T-cell (primary cell): ENCODE measurements at regions of chr5 and their contacts with region 1.

Region 1: DNA sequence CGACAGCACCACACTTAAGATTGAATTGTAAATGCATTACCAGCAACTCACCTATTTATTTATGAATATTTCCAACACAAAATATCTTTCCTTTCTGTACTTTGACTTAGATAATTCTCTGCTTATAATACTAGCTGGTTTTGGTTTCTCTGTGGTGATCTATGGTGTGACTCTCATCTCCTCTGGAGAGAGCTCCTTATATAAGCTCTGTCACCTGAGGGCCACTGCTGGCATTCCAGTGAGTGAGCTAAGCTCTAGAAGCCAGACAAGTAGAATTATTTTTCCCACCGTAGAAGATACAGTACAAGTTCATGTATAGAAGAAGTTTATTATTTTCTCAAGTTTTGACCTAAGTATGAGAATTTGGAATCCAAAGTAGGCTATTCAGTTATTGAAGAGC is 111.5 kb downstream of the CDC42SE2 start:
- DNase-seq: peak in 1 of 35 experiments; percentile 59
- ATAC-seq: no peak
- H3K4me3 ChIP-seq: no peak overlapping the region
- H3K4me3 Mint-ChIP-seq: peak overlapping the region; percentile 26 to 52 (median 47)
- H3K27ac ChIP-seq: peak overlapping the region; percentile 79
- H3K27ac Mint-ChIP-seq: peak overlapping the region; percentile 92 to 100
- H3K4me1 ChIP-seq: peaks cover 45 to 48% of the 10 kb centered on the region in 2 experiments
- H3K4me1 Mint-ChIP-seq: peaks cover 86 to 97% (median 95%) of the 10 kb centered on the region in 3 donors
- H3K27me3 ChIP-seq: no peaks in the 10 kb centered on the region
- H3K27me3 Mint-ChIP-seq: no peaks in the 10 kb centered on the region

Region 2: GRCh38 chr5:131148835-131149234 is 226.5 kb before region 1 on chr5:
- CTCF ChIA-PET with region 1: no interaction called
- POLR2A ChIA-PET with region 1: no interaction called
- DNase-seq: no peak
- ATAC-seq: no peak
- H3K4me3 ChIP-seq: no peak overlapping the region
- H3K4me3 Mint-ChIP-seq: no peak overlapping the region
- H3K27ac ChIP-seq: no peak overlapping the region
- H3K27ac Mint-ChIP-seq: no peak overlapping the region
- H3K4me1 ChIP-seq: no peaks in the 10 kb centered on the region
- H3K4me1 Mint-ChIP-seq: no peaks in the 10 kb centered on the region
- H3K27me3 ChIP-seq: no peaks in the 10 kb centered on the region
- H3K27me3 Mint-ChIP-seq: no peaks in the 10 kb centered on the region

Region 3: GRCh38 chr5:131357739-131358561 is 17.4 kb before region 1 on chr5:
- CTCF ChIA-PET with region 1: interaction called, 4 to 11 read pairs
- POLR2A ChIA-PET with region 1: interaction called, 7 read pairs
- DNase-seq: peak in 10 of 35 experiments; percentile 16 to 59 (median 34)
- ATAC-seq: peak; percentile 68 to 76 (median 71)
- H3K4me3 ChIP-seq: no peak overlapping the region
- H3K4me3 Mint-ChIP-seq: peak overlapping the region; percentile 3 to 57 (median 27)
- H3K27ac ChIP-seq: peak overlapping the region; percentile 66
- H3K27ac Mint-ChIP-seq: peak overlapping the region; percentile 81 to 90
- H3K4me1 ChIP-seq: peaks cover 30 to 33% of the 10 kb centered on the region in 2 experiments
- H3K4me1 Mint-ChIP-seq: peaks cover 75 to 81% (median 77%) of the 10 kb centered on the region in 3 donors
- H3K27me3 ChIP-seq: no peaks in the 10 kb centered on the region
- H3K27me3 Mint-ChIP-seq: no peaks in the 10 kb centered on the region